ENCODE measurements at regions of chr4 and their contacts with region 1.

Region 1: DNA sequence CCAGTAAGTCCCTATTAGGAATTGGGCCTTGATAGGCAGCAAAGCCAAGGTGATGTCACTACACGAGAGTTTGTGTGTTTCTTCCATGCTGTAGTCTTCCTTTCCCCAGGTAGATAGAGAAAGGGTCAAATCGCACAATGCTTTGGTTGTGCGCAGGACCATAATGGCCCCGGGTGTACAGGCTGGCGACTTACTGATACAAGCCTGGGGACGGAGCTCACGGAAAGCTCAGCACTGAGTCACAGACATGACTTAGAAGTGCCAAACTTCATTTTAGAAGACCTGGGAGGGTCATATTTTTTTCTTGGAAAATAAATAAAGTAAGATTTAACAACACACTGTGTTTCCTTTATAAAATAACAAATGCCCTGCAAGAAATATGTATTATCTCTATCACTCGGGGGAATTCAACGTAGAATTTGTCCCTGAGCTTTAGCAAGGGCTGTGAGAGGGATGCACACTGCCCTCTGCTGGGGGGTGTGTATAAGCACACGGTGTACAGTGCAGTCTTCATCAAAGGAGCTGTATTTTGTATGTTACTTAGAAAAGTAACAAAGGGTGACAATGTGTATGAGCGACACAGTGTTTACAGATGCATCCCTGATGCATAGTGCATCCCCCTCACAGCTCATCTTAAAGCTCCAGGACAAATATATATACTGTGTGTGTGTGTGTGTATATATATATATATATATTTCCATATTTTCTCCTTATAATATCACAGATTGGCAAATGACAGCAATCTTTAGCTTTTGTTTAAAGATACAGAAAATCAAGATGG is 254.5 kb upstream of the VEGFC start:
- DNase-seq: no peak

Region 2: DNA sequence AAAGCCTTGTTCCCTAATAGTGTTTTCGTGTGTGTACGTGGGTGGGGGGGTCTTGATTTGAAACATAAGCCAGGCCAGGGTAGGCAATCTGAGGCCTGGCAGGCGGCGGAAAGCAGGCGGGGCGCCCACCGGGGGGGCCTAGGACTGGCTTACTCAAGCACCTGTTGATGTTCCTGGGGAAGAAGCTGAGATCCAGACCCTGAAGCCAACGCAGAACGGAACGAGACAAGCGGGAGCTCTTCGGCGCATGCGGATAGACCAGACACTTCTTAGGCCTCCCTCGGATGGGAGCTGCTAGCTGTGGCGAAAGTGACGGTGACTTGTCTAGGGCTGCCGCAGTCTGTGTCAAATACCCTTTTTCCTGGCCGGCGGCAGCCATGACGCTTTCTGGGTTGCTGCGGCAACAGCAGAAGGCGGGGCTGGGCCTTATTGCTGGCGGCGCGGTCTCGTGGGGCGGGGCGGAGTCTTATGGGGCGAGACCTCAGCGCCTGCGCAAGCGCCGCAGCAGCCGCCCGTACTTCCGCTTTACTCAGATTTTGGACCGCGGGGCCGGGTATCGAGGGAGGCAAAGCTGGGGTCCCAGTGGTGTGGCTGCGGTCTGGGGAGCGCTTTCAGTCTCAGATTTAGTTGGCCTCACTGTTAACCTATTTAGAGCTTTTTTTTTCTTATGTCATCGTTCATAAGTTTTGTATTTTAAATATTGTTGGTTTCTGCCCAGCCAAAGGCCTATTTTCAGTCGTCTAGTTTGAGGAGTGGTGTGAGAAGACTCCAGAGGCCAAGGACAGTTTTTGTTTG is 851.9 kb before region 1 on chr4 and contains the start of gene SPATA4:
- intact Hi-C with region 1: loop called in 1 of 2 experiments (anchors 5 kb)
- DNase-seq: peak; percentile 98
- total RNA-seq, gene SPATA4: 0.76 TPM in 1 of 2 donors, not detected in the other

Region 3: GRCh38 chr4:176789955-176790354 is 257.3 kb before region 1 on chr4:
- intact Hi-C with region 1: loop called in 1 of 2 experiments (anchors 10 kb)
- DNase-seq: no peak

Region 4: DNA sequence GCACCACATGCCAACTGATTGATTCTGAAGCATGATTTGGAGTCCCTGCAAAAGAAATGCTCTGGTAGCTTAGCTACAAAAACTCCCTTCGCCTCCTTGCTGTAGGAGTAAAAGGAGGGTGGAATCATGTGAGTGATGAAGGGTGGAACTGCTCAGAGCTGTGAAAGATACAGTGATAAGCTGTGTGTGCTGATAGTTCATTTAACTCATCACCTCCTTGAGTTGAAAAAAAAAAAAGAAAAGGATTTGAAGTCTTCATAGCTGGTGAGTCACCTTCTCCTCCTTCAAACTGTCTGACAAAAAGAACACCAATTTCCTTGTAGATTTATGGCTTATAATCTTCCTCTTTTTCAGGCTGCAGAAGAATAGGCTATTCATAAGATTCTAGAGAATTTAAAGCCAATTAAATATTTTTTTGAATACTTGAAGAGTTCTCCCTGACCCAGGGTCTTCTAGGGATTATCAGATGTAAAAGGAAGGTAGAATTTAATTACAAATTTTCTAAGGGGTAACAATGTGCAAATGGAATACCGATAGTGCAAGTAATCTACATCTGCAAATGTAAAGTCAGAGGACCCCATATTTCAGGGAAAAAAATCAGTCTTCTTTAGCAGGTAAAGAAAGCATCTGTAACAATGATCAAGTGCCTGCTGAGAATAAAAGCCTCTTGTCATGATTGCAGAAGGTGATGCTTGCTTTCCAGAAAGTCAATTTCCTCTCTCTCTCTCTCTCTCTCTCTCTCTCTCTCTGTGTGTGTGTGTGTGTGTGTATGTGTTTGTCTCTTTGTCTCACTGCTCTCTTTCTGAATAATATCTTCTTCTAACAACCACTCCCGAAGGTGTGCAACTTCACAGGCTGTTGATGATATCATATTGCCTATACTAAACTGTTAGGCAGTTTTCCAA is 45.7 kb before region 1 on chr4:
- intact Hi-C with region 1: no loop called
- DNase-seq: no peak

Region 5: DNA sequence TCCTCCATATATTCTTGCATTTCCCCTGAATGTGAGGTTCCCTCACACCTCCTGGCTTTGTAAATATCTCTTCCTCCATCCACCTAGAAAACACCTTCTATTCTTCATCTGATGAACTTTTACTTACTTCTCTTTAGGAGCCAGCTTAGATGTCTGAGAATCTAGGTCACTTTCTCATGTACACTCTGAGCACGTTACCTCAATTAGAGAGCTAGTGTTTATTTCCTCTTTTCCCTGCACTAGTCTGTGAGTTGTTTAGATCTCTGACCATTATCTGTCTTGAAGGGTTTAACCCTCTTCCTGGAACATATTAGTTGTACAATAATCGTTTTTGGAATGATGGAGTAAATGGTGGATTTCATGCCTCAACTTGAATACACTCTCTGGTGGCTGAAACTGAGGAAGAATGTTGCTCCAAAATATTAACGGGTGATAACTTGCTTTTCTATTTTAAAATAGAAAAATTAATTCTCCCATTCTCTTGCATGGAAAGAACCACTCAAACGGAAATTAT is 253.9 kb after region 1 on chr4:
- intact Hi-C with region 1: no loop called
- DNase-seq: no peak

Measured in posterior vena cava (tissue), 2 donors.